Endothelial cell of umbilical vein (primary cell): ENCODE measurements at regions of chr12 and their contacts with region 1.

Region 1: DNA sequence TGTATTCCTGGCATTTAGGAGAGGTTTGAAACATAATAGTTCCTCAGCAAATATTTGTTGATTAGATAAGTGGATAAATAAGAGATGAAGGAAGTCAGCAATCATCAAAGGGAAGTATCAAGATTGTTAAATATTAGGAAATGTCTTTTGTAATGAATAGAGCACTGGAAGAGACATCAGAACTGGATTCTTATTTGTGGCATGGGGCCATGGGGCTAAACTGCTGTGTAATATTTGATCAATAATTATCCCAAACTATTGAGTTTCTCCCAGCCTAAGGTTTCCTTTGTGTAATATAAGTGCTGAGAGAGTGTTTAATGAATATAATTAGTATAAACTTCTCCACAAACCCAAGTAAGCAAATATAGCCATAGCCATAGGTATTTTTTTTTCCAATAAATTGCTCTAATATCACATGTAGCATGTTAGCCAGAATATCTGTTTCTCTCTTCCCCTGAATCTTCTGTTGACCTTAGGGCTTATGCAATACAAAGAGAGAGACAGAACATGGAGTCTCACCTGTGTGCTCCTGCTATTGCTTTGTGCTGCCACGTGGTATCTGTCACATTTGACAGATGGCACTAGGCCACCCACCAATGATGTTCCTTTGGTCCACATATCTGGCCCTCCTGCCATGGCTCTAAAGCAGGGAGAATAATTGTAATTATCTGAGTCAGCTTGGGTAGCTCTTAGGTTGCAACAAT is 658.7 kb downstream of the SOX5 start:
- DNase-seq: no peak
- H3K4me3 ChIP-seq: no peak overlapping the region
- H3K27ac ChIP-seq: no peak overlapping the region
- H3K4me1 ChIP-seq: peaks cover 13% of the 10 kb centered on the region
- H3K27me3 ChIP-seq: no peaks in the 10 kb centered on the region
- CTCF ChIP-seq: no peak
- POLR2A ChIP-seq: no peak

Region 2: DNA sequence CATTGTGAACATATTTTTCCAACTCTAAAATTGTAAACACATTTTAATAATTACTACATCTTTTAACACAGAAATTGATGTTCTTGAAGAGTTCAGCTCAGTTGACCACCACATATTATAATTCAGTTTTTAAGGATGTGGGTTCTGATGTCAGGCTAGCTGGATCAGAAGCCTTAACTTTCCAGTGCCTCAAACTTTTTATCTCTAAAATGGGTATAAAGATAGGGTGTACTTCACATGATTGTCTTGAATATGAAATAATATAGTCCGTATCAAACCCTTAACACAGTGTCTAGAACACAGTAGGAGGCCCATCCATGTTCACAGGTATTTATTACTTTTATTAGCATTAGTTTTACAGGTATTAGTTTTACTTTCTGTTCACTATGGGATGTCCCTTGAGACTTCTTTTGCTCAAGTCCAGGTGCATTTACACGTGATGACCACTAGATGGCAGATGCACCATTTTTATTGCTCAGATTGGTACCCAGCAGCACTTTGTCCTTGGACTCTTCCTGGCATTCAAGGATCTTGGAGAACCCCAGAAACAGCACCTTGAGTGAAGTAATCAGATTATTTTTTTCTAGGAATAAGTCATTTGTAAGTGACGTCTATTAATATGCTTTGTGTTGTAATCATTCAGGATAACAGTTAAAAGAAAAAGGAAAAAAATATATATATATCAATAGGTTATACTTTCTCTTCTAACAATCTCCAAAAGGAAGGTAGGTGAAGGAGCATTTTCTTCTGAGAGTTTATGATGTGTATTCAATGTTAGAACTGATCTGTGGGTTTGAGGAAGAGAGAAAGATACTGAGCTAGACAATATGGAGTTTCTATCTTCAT is 85.6 kb before region 1 on chr12:
- CTCF ChIA-PET with region 1: no interaction called
- POLR2A ChIA-PET with region 1: no interaction called
- dilution Hi-C with region 1: no loop called
- intact Hi-C with region 1: no loop called
- DNase-seq: peak; percentile 65
- H3K4me3 ChIP-seq: no peak overlapping the region
- H3K27ac ChIP-seq: no peak overlapping the region
- H3K4me1 ChIP-seq: no peaks in the 10 kb centered on the region
- H3K27me3 ChIP-seq: peaks cover 0 to 3% of the 10 kb centered on the region in 2 experiments
- CTCF ChIP-seq: peak; percentile 67 to 74
- POLR2A ChIP-seq: no peak

Region 3: DNA sequence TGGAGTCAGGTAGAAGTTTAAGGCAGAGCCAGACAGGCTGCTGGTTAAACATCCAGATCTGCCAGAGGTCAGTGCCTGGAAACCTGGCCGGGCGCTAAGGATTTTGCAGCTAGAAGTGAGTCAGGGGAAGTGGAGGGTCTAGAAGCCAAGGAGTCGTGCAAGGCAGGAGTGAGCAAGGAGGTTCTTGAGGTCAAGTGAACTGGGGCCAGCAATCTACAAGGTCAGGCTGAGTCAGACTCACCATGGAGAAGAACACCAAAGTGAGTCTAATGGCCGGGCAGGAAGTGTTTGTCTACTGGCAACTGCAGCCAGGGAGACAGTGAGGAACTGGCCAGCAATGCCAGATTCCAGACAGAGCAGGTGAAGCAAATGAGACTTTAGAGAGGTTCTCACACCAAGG is 37.6 kb before region 1 on chr12:
- CTCF ChIA-PET with region 1: no interaction called
- POLR2A ChIA-PET with region 1: no interaction called
- dilution Hi-C with region 1: no loop called
- intact Hi-C with region 1: loop called (anchors 2 kb)
- DNase-seq: peak; percentile 74
- H3K4me3 ChIP-seq: no peak overlapping the region
- H3K27ac ChIP-seq: peak overlapping the region; percentile 48
- H3K4me1 ChIP-seq: peaks cover 11% of the 10 kb centered on the region
- H3K27me3 ChIP-seq: no peaks in the 10 kb centered on the region
- CTCF ChIP-seq: no peak
- POLR2A ChIP-seq: no peak

Region 4: DNA sequence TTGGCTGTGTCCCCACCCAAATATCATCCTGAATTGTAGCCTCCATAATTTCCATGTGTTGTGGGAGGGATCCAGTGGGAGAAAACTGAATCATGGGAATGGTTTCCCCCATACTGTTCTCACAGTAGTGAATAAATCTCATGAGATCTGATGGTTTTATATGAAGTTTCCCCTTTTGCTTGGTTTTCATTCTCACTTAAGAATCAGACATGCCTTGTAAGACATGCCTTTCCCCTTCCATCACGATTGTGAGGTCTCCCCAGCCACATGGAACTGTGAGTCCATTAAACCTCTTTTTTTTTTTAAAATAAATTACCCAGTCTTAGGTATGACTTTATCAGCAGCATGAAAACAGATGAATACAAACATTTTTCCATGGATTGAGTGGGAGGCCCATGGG is 12.9 kb before region 1 on chr12:
- CTCF ChIA-PET with region 1: interaction called, 10 read pairs
- POLR2A ChIA-PET with region 1: no interaction called
- dilution Hi-C with region 1: no loop called
- intact Hi-C with region 1: no loop called
- DNase-seq: no peak
- H3K4me3 ChIP-seq: no peak overlapping the region
- H3K27ac ChIP-seq: no peak overlapping the region
- H3K4me1 ChIP-seq: no peaks in the 10 kb centered on the region
- H3K27me3 ChIP-seq: no peaks in the 10 kb centered on the region
- CTCF ChIP-seq: no peak
- POLR2A ChIP-seq: no peak